ENCODE measurements at regions of chr6 and their contacts with region 1.

Region 1: DNA sequence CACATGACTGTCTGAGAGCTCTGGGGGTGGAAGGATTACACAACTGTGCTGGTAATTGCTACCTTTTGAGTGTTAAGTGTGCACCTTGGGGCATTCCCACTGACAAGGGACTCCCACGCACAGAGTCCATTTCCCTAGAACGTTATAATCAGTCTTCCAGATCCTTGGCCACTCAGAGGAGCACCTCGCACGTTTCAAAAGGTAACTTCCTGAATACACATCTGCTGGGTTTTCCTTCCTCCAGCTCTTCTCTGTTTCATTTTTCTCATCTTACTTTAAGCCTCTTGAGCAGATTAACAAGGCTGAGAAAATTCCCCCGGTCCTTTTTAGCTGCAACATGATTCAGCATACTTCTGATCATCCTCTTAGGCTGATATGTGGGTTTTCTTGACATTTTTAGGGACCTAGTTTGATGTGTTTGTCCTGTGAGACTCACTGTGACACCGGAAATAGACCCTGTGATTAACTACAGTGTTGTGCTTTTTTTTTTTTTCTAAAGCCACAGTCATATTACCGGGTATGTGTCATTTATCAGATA is 98.4 kb upstream of the DUSP22 start:
- DNase-seq: no peak
- H3K4me3 ChIP-seq: no peak overlapping the region
- H3K27ac ChIP-seq: no peak overlapping the region
- H3K4me1 ChIP-seq: peaks cover 12% of the 10 kb centered on the region
- H3K27me3 ChIP-seq: no peaks in the 10 kb centered on the region
- CTCF ChIP-seq: no peak
- POLR2A ChIP-seq: no peak

Region 2: GRCh38 chr6:223763-224162 is 29.9 kb after region 1 on chr6:
- intact Hi-C with region 1: loop called (anchors 2 kb)
- DNase-seq: no peak
- H3K4me3 ChIP-seq: no peak overlapping the region
- H3K27ac ChIP-seq: no peak overlapping the region
- H3K4me1 ChIP-seq: no peaks in the 10 kb centered on the region
- H3K27me3 ChIP-seq: no peaks in the 10 kb centered on the region
- CTCF ChIP-seq: no peak
- POLR2A ChIP-seq: no peak

Region 3: GRCh38 chr6:280775-281468 is 87.1 kb after region 1 on chr6:
- intact Hi-C with region 1: no loop called
- DNase-seq: no peak
- H3K4me3 ChIP-seq: no peak overlapping the region
- H3K27ac ChIP-seq: no peak overlapping the region
- H3K4me1 ChIP-seq: no peaks in the 10 kb centered on the region
- H3K27me3 ChIP-seq: no peaks in the 10 kb centered on the region
- CTCF ChIP-seq: no peak
- POLR2A ChIP-seq: no peak

Region 4: DNA sequence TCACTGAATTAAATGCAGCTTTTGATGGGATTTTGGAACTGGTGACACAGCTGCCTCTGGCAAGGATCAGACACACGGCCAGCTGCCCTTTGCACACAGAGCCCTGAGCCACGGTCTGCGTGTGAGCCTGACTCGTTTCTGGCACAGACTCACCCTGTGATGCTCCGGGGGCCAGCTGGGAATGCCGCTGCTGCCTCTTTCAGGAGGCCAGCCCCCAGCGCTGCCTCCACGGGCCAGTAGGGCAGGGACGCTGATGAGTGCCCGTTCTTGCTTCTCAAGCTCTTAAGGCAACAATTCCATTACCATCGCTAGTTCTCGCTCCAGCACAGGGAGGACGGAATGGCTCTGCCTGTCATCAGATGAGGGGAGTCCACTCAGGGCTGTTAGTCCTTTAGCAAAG is 259.3 kb after region 1 on chr6:
- intact Hi-C with region 1: no loop called
- DNase-seq: peak; percentile 68
- H3K4me3 ChIP-seq: no peak overlapping the region
- H3K27ac ChIP-seq: peak overlapping the region; percentile 71 to 78
- H3K4me1 ChIP-seq: peaks cover 18% of the 10 kb centered on the region
- H3K27me3 ChIP-seq: no peaks in the 10 kb centered on the region
- CTCF ChIP-seq: no peak
- POLR2A ChIP-seq: no peak

Measured in testis (tissue), 5 donors.